ENCODE measurements at regions of chr3 and their contacts with region 1.

Region 1: GRCh38 chr3:156509189-156510174 is 45.4 kb downstream of the SSR3 start:
- DNase-seq: no peak
- ATAC-seq: peak; percentile 58
- H3K4me3 Mint-ChIP-seq: no peak overlapping the region
- H3K27ac Mint-ChIP-seq: no peak overlapping the region
- H3K4me1 Mint-ChIP-seq: no peaks in the 10 kb centered on the region
- H3K27me3 Mint-ChIP-seq: peaks cover 16% of the 10 kb centered on the region
- CTCF ChIP-seq: peak; percentile 21

Region 2: DNA sequence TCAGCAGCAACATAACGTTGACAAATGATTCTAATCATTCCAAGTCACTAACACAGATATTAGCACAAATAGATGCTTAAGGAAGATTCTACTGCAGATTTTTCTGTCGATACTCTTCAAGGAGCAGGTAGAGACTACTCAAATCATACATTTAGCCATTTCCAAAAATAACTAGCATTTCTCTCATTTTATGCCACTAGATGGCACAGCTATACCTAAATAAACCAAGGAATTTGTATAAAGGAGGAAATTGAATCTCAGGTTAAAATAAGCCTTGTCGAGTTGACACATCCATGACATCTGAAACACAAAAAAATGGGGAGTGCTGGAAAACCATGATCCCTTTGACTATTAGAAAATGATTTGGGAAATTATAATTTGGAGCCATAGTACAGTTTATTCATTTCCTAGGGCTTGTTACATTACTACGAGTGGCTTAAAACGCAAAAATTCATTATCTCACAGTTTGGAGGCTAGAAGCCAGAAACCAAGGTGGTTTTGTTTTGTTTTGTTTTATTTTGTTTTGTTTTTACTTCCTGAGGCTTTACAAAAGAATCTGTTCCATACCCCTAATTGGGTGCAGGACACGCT is 1156.5 kb before region 1 on chr3:
- CTCF ChIA-PET with region 1: no interaction called
- POLR2A ChIA-PET with region 1: no interaction called
- intact Hi-C with region 1: loop called (anchors 5 kb)
- DNase-seq: no peak
- ATAC-seq: no peak
- H3K4me3 Mint-ChIP-seq: no peak overlapping the region
- H3K27ac Mint-ChIP-seq: no peak overlapping the region
- H3K4me1 Mint-ChIP-seq: no peaks in the 10 kb centered on the region
- H3K27me3 Mint-ChIP-seq: peaks cover 2% of the 10 kb centered on the region
- CTCF ChIP-seq: no peak

Region 3: GRCh38 chr3:156044634-156044975 is 464.9 kb before region 1 on chr3:
- CTCF ChIA-PET with region 1: interaction called, 3 read pairs
- POLR2A ChIA-PET with region 1: no interaction called
- intact Hi-C with region 1: loop called (anchors 1 kb)
- DNase-seq: no peak
- ATAC-seq: no peak
- H3K4me3 Mint-ChIP-seq: no peak overlapping the region
- H3K27ac Mint-ChIP-seq: no peak overlapping the region
- H3K4me1 Mint-ChIP-seq: no peaks in the 10 kb centered on the region
- H3K27me3 Mint-ChIP-seq: peaks cover 20% of the 10 kb centered on the region
- CTCF ChIP-seq: no peak

Region 4: GRCh38 chr3:156341831-156342416 is 167.6 kb before region 1 on chr3:
- CTCF ChIA-PET with region 1: interaction called, 4 read pairs
- POLR2A ChIA-PET with region 1: no interaction called
- intact Hi-C with region 1: loop called (anchors 1 kb)
- DNase-seq: no peak
- ATAC-seq: peak; percentile 94
- H3K4me3 Mint-ChIP-seq: no peak overlapping the region
- H3K27ac Mint-ChIP-seq: no peak overlapping the region
- H3K4me1 Mint-ChIP-seq: peaks cover 6% of the 10 kb centered on the region
- H3K27me3 Mint-ChIP-seq: peaks cover 32% of the 10 kb centered on the region
- CTCF ChIP-seq: no peak

Region 5: GRCh38 chr3:156449712-156450574 is 59.5 kb before region 1 on chr3:
- CTCF ChIA-PET with region 1: interaction called, 27 read pairs
- POLR2A ChIA-PET with region 1: no interaction called
- intact Hi-C with region 1: loop called (anchors 1 kb)
- DNase-seq: no peak
- ATAC-seq: no peak
- H3K4me3 Mint-ChIP-seq: no peak overlapping the region
- H3K27ac Mint-ChIP-seq: no peak overlapping the region
- H3K4me1 Mint-ChIP-seq: peaks cover 10% of the 10 kb centered on the region
- H3K27me3 Mint-ChIP-seq: peaks cover 13% of the 10 kb centered on the region
- CTCF ChIP-seq: no peak

Region 6: DNA sequence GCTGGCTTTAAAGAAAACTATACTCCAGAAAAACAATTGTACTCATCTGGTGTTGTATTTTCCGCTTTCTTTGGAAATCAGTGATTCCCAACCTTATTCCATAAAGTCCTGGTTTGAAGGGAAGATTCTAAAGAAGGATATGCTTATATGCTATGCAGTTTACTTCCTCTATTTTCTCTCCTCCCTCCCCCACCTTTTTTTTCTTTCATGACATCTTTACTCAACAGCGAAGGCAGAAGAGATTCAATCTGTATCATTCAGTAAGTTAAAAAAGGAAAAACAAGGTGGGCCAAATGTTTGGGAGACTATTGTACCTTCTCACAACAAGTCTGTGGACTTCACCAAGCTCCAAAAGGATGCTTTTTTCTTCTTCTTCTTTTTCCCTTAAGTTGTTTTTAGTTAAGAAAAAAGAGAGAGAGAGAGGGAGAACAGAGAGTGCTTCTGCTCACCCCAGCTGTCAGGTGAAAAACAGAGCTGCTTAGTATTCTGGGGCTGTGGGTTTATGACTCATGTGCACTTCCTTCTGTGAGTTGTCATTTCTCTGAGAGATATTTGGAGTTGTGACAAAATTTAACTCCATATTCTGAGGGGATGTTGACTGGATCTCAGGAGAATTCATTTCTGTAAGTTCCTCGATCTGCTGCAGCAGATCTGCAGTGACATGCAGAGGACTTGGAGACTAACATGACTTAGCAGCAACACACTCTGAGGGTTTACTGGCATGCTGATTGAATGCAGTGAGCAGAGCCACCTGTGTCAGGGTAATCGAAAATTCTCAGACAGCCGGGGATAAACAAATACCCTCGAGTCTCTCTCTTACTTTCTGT is 25.3 kb before region 1 on chr3:
- CTCF ChIA-PET with region 1: interaction called, 7 read pairs
- POLR2A ChIA-PET with region 1: interaction called, 3 read pairs
- intact Hi-C with region 1: loop called (anchors 1 kb)
- DNase-seq: peak; percentile 20
- ATAC-seq: peak; percentile 81
- H3K4me3 Mint-ChIP-seq: peak overlapping the region; percentile 79
- H3K27ac Mint-ChIP-seq: peak overlapping the region; percentile 93
- H3K4me1 Mint-ChIP-seq: peaks cover 32% of the 10 kb centered on the region
- H3K27me3 Mint-ChIP-seq: peaks cover under 1% of the 10 kb centered on the region
- CTCF ChIP-seq: no peak

Region 7: DNA sequence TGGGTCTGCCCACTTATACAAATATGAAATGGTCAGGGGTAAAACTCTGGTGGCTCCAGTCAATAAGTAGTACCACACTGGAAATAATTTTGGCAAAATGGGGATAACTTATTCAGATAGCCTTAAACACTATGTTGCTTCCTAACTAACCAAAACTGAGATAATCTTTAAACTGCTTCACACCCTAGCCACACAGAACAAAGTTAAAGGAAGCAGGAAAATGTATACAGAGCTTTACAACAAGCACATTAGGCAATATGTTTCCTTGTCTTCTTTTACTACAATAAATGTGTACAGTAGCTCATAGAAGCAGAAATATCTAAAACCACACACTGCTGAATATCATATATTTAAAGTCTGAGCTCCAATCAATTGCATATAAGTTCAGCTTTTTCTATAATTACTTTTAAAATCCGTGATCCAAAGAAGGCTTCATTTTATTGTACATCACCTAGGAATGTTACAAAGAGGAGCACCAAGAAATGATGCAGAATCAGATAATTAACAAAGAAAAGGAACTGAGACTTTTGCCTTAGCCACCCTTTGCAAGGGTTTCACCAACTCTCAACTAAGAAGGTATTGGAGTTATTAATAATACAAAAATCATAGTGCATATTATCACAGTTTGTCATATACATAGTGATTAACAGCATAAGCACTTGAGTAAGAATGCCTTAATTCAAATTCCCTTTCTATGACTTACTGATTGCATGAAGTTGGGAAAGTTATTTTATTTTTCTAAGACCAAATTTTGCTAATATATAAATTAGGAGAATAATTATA is 54.6 kb after region 1 on chr3:
- CTCF ChIA-PET with region 1: no interaction called
- POLR2A ChIA-PET with region 1: no interaction called
- intact Hi-C with region 1: no loop called
- DNase-seq: no peak
- ATAC-seq: no peak
- H3K4me3 Mint-ChIP-seq: no peak overlapping the region
- H3K27ac Mint-ChIP-seq: no peak overlapping the region
- H3K4me1 Mint-ChIP-seq: peaks cover 5% of the 10 kb centered on the region
- H3K27me3 Mint-ChIP-seq: no peaks in the 10 kb centered on the region
- CTCF ChIP-seq: no peak